ENCODE measurements at regions of chr4 and their contacts with region 1.

Region 1: GRCh38 chr4:144634978-144635747 is 10.8 kb upstream of the HHIP start:
- DNase-seq: no peak
- H3K4me3 ChIP-seq: no peak overlapping the region
- H3K27ac ChIP-seq: no peak overlapping the region
- H3K4me1 ChIP-seq: no peaks in the 10 kb centered on the region
- H3K27me3 ChIP-seq: no peaks in the 10 kb centered on the region
- CTCF ChIP-seq: no peak
- POLR2A ChIP-seq: no peak

Region 2: DNA sequence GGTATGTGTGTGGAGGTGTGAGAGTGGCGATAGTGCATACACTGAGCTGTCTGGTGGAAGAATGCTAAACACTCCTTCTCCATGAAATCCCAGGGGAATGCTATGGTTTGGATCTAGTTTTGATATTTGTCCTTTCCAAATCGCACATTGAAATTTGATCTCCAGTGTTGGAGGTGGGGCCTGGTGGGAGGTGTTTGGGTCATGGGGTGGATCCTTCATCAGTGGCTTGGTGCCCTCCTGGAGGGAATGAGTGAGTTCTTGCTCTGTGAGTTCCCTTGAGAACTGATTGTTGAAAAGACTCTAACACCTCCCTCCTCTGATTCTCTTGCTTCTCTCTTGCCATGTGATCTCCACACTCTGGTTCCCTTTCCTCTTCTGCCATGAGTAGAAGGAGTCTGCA is 103.3 kb before region 1 on chr4:
- intact Hi-C with region 1: no loop called
- DNase-seq: no peak
- H3K4me3 ChIP-seq: no peak overlapping the region
- H3K27ac ChIP-seq: no peak overlapping the region
- H3K4me1 ChIP-seq: no peaks in the 10 kb centered on the region
- H3K27me3 ChIP-seq: no peaks in the 10 kb centered on the region
- CTCF ChIP-seq: no peak
- POLR2A ChIP-seq: no peak

Region 3: DNA sequence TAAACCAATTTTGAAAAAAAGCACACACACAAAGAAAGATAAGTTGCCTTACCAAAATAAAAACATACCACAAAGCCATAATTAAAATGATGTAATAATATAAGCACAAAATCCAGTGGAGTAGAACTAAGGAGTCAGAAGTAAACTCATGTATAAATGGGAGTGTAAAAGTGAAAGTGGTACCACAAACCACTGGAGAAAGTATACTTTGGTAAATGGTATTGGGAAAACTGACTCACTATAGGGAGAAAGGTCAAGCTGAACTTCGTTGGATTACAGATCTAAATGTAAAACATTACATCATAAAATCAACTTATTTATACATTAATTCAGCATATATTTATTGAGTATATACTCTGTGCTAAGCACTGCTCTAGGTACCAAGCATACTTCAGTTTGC is 35.5 kb before region 1 on chr4:
- intact Hi-C with region 1: loop called (anchors 2 kb)
- DNase-seq: no peak
- H3K4me3 ChIP-seq: no peak overlapping the region
- H3K27ac ChIP-seq: no peak overlapping the region
- H3K4me1 ChIP-seq: no peaks in the 10 kb centered on the region
- H3K27me3 ChIP-seq: no peaks in the 10 kb centered on the region
- CTCF ChIP-seq: no peak
- POLR2A ChIP-seq: no peak

Region 4: GRCh38 chr4:145012841-145013240 is 377.7 kb after region 1 on chr4:
- intact Hi-C with region 1: no loop called
- DNase-seq: no peak
- H3K4me3 ChIP-seq: no peak overlapping the region
- H3K27ac ChIP-seq: peak overlapping the region in 1 of 8 donors; percentile 26
- H3K4me1 ChIP-seq: peaks cover 0 to 18% (median 10%) of the 10 kb centered on the region in 6 donors
- H3K27me3 ChIP-seq: no peaks in the 10 kb centered on the region
- CTCF ChIP-seq: no peak
- POLR2A ChIP-seq: no peak